Thyroid gland (tissue), 4 donors: ENCODE measurements at regions of chr17 and their contacts with region 1.

Region 1: DNA sequence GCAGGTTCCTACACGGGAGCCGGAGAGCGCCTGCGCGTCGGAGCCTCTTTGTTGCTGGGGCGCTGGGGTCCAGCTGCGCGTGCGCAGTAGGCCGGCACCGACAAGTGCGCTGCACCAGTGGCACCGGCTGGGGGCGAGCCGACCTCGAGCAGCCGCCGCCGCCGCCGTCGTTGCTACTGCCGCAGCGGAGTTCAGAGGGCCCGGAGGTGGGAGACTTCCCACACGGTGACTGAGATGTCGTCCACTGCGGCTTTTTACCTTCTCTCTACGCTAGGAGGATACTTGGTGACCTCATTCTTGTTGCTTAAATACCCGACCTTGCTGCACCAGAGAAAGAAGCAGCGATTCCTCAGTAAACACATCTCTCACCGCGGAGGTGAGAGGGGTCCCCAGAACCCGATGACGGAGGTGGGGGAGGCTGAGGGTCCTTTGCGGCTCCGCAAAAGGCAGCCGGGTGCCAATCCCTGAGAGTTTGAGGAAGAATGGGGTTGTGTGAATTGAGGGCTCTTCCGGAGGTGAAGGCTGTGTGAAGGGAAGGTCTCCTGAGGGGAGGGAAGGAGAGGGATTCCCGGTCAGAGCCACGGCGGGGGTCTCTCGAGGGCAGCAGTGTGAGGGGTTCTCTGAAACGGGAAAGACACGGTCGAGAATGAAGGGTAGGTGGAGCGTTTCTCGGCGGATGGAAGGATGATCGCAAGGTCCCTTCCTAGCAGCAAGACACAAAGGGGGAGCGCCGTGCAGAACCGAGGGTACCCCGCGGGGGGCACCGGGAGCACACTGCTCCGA is at the start of gene GDPD1:
- DNase-seq: peak; percentile 97 to 98
- H3K4me3 ChIP-seq: peak within 1 kb of the TSS; percentile 27 to 97 (median 73)
- H3K27ac ChIP-seq: peak within 1 kb of the TSS; percentile 64 to 88 (median 84)
- H3K4me1 ChIP-seq: no peaks in the 10 kb centered on the region
- H3K27me3 ChIP-seq: no peaks in the 10 kb centered on the region
- CTCF ChIP-seq: peak; percentile 35 to 89 (median 72)
- POLR2A ChIP-seq: peak in 1 of 2 donors; percentile 69
- total RNA-seq, gene GDPD1: 1.0 to 3.7 (median 3.5) TPM

Region 2: DNA sequence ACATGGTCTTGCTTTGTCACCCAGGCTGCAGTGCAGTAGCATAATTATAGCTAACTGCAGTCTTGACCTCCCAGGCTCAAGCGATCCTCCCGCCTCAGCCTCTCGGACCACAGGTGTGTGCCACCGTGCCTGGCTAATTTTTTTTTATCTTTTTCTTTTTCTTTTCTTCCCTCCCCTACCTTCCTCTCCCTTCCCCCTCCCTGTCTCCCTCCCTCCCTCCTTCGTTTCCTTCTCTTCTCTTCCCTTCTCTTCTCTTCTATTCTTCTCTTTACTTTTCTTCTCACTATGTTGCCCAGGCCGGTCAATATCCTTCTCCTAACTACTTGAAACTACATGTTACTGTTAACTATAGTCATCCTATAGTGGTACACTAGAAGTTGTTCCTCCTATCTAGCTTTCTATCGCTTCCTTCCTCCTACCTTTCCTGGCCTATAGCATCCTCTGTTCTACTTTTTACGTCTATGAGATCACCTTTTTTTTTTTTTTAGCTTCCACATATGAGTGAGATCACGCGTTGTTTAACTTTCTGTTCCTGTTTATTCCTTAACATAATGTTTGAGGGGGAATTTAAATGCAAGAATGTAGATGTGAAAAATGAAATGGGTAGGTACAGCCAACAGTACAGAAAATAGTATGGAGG is 80.2 kb after region 1 on chr17:
- intact Hi-C with region 1: loop called (anchors 10 kb)
- DNase-seq: no peak
- H3K4me3 ChIP-seq: no peak overlapping the region
- H3K27ac ChIP-seq: no peak overlapping the region
- H3K4me1 ChIP-seq: peaks cover 8 to 10% of the 10 kb centered on the region in 2 donors
- H3K27me3 ChIP-seq: no peaks in the 10 kb centered on the region
- CTCF ChIP-seq: no peak
- POLR2A ChIP-seq: no peak

Region 3: DNA sequence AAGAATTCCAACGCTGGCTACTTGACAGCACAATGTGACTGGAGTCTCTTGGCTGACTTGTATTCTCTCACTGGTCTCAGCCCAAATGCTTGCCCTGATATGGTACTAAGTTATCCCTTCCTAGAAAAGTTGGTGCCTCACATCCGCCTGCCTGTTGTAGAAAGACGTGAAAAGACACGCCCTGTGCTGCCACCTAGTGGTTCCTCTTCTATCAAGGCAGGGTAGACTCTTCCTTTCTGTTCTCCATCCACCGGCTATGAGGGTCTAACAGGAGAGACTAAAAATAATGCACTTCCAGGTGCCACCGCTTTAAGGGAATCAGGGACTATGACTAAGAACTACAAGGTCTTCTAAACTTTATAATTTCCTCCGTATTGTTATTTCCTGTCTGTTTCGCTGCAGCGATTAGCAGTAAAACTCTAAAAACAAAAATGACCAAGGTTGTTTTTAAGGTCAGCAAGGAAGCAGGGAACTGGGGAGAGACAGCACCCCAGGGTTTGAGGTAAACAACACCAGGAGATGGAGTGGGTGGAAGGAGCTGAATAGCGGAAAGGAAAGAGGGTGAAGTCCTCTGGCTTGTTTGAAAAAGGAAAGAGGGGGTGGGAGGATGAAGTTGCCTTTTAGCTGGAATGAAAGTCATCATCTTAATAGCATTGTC is 220.3 kb after region 1 on chr17:
- intact Hi-C with region 1: loop called (anchors 10 kb)
- DNase-seq: peak; percentile 91 to 94
- H3K4me3 ChIP-seq: no peak overlapping the region
- H3K27ac ChIP-seq: peak overlapping the region; percentile 34 to 89 (median 86)
- H3K4me1 ChIP-seq: peaks cover 18 to 23% of the 10 kb centered on the region in 2 donors
- H3K27me3 ChIP-seq: no peaks in the 10 kb centered on the region
- CTCF ChIP-seq: peak; percentile 52 to 95 (median 81)
- POLR2A ChIP-seq: no peak

Region 4: GRCh38 chr17:59870482-59870881 is 649.9 kb after region 1 on chr17:
- intact Hi-C with region 1: no loop called
- DNase-seq: no peak
- H3K4me3 ChIP-seq: no peak overlapping the region
- H3K27ac ChIP-seq: peak overlapping the region in 2 of 3 donors; percentile 47 to 67
- H3K4me1 ChIP-seq: peaks cover 0 to 4% of the 10 kb centered on the region in 2 donors
- H3K27me3 ChIP-seq: no peaks in the 10 kb centered on the region
- CTCF ChIP-seq: no peak
- POLR2A ChIP-seq: no peak